Right cardiac atrium (tissue), 5 donors: ENCODE measurements at regions of chr18 and their contacts with region 1.

Region 1: DNA sequence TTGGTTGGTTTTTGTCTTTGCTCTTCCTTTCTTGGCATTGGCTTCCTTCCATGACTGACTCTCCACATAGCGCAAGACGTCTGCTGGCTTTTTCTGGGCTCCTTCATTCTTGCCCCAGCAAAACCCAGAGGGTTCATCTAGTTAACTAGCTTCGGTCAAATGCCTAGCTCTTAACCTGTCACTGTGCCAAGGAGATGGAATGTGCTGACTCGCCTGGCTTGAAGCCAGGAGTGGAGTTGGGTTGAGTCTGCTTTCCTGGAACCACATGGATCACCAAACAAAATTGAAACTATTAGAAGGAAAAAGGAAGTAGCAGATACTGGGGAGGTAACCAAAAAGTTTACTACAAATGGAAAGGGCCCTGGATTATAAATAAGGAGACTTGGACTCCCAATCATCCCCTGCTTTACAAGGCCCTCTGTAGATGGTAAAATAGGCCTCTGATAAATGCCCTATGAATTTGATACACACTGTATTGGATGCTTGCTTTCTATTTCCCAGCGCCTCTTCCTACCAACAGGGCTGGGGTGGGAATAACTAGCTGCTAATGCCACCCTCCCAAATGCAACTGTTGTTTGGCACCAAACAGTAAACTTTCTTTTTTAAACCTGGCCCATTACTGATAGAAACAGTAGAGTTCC is 11.3 kb downstream of the MALT1 start:
- DNase-seq: peak; percentile 51 to 75 (median 64)
- ATAC-seq: peak; percentile 41
- H3K4me3 ChIP-seq: no peak overlapping the region
- H3K27ac ChIP-seq: no peak overlapping the region
- H3K4me1 ChIP-seq: no peaks in the 10 kb centered on the region
- H3K27me3 ChIP-seq: no peaks in the 10 kb centered on the region

Region 2: DNA sequence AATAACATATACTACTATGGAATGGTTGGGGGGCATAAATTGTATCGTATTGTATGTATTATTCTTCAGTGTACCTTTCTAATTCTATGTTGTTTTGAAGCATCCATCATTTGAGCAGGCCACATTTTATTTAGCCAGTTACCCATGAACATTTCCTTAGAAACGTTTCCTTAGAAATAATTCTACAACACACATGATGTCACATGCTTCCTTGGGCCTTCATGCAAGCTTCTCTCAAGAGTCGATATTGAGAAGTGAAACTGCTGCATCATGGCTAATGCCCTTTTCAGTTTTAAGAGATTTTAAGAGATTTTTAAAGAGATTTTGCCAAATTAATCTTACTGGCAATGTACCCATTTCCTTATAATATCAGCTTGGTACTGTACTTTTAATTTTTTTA is 117.5 kb before region 1 on chr18:
- intact Hi-C with region 1: no loop called
- DNase-seq: no peak
- ATAC-seq: no peak
- H3K4me3 ChIP-seq: no peak overlapping the region
- H3K27ac ChIP-seq: no peak overlapping the region
- H3K4me1 ChIP-seq: no peaks in the 10 kb centered on the region
- H3K27me3 ChIP-seq: no peaks in the 10 kb centered on the region

Region 3: DNA sequence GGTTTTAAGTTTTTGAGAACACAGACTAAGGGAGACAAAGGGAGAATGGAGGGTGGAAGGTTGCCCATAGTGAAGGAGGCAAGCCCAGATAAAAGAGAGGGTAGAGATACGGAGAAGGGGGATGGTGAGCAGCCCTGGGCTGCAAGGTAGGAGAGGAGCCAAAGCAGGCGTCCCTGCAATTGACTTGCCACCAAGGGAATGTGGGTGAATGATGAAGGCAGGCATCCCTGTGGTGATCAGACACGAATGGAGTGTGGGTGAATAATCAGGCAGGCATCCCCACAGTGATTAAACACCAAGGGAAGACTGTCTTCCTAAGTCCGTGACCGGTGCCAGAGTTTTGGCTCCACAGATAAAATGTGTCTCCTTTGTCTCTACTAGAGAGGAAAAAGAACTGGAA is 37.2 kb before region 1 on chr18:
- intact Hi-C with region 1: loop called in 1 of 4 experiments (anchors 2 kb)
- DNase-seq: no peak
- ATAC-seq: no peak
- H3K4me3 ChIP-seq: no peak overlapping the region
- H3K27ac ChIP-seq: no peak overlapping the region
- H3K4me1 ChIP-seq: peaks cover 1% of the 10 kb centered on the region
- H3K27me3 ChIP-seq: no peaks in the 10 kb centered on the region

Region 4: DNA sequence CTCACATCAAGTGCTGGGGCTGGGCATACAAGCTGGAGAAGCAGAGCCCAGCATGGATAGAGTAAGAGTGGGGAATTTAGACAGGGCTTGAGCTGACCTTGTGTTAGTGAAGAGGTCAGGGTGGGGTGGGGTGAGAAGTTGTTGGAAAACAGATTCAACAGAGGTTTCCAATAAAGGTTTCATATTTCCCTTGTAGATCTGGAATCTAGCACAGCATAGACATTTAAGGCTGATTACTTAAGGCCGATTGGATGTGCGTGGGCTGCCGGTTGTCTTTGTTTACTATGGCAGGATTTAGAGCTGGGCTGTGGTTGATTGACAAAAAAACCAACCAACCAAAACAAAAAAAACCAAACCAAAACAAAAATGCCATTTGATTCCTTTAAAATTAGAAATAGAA is 342.3 kb after region 1 on chr18:
- intact Hi-C with region 1: no loop called
- DNase-seq: peak in 2 of 3 donors; percentile 32 to 70
- ATAC-seq: peak; percentile 72 to 79
- H3K4me3 ChIP-seq: no peak overlapping the region
- H3K27ac ChIP-seq: peak overlapping the region; percentile 51
- H3K4me1 ChIP-seq: peaks cover 9% of the 10 kb centered on the region
- H3K27me3 ChIP-seq: no peaks in the 10 kb centered on the region